Activated CD4-positive, alpha-beta T cell treated with anti-CD3 and anti-CD28 coated beads for 36 hours (primary cell): ENCODE measurements at regions of chr18 and their contacts with region 1.

Region 1: GRCh38 chr18:69958422-69958821 is 10.7 kb upstream of the CD226 start:
- DNase-seq: peak; percentile 72
- ATAC-seq: peak; percentile 73
- H3K4me3 Mint-ChIP-seq: no peak overlapping the region
- H3K27ac Mint-ChIP-seq: no peak overlapping the region
- H3K4me1 Mint-ChIP-seq: peaks cover 13% of the 10 kb centered on the region
- H3K27me3 Mint-ChIP-seq: no peaks in the 10 kb centered on the region

Region 2: GRCh38 chr18:69387186-69387585 is 571.2 kb before region 1 on chr18:
- CTCF ChIA-PET with region 1: no interaction called
- POLR2A ChIA-PET with region 1: no interaction called
- intact Hi-C with region 1: no loop called
- DNase-seq: no peak
- ATAC-seq: no peak
- H3K4me3 Mint-ChIP-seq: no peak overlapping the region
- H3K27ac Mint-ChIP-seq: no peak overlapping the region
- H3K4me1 Mint-ChIP-seq: no peaks in the 10 kb centered on the region
- H3K27me3 Mint-ChIP-seq: peaks cover 4% of the 10 kb centered on the region

Region 3: GRCh38 chr18:69885841-69886531 is 72.4 kb before region 1 on chr18:
- CTCF ChIA-PET with region 1: interaction called, 10 read pairs
- POLR2A ChIA-PET with region 1: interaction called, 9 read pairs
- intact Hi-C with region 1: loop called in 1 of 2 experiments (anchors 2 kb)
- DNase-seq: peak; percentile 79
- ATAC-seq: peak; percentile 71
- H3K4me3 Mint-ChIP-seq: peak overlapping the region; percentile 60
- H3K27ac Mint-ChIP-seq: peak overlapping the region; percentile 95
- H3K4me1 Mint-ChIP-seq: peaks cover 89% of the 10 kb centered on the region
- H3K27me3 Mint-ChIP-seq: no peaks in the 10 kb centered on the region

Region 4: GRCh38 chr18:69935319-69936190 is 22.9 kb before region 1 on chr18:
- CTCF ChIA-PET with region 1: interaction called, 7 read pairs
- POLR2A ChIA-PET with region 1: interaction called, 19 read pairs
- intact Hi-C with region 1: loop called (anchors 1 kb)
- DNase-seq: peak; percentile 93
- ATAC-seq: peak; percentile 92
- H3K4me3 Mint-ChIP-seq: no peak overlapping the region
- H3K27ac Mint-ChIP-seq: no peak overlapping the region
- H3K4me1 Mint-ChIP-seq: peaks cover 34% of the 10 kb centered on the region
- H3K27me3 Mint-ChIP-seq: no peaks in the 10 kb centered on the region

Region 5: GRCh38 chr18:69978732-69979715 is 20.6 kb after region 1 on chr18:
- CTCF ChIA-PET with region 1: interaction called, 3 read pairs
- POLR2A ChIA-PET with region 1: no interaction called
- intact Hi-C with region 1: loop called (anchors 1 to 2 kb)
- DNase-seq: peak; percentile 17
- ATAC-seq: peak; percentile 86
- H3K4me3 Mint-ChIP-seq: no peak overlapping the region
- H3K27ac Mint-ChIP-seq: peak overlapping the region; percentile 48
- H3K4me1 Mint-ChIP-seq: peaks cover 46% of the 10 kb centered on the region
- H3K27me3 Mint-ChIP-seq: no peaks in the 10 kb centered on the region

Region 6: GRCh38 chr18:70205421-70206397 is 247.3 kb after region 1 on chr18 and contains the start of gene RTTN:
- CTCF ChIA-PET with region 1: no interaction called
- POLR2A ChIA-PET with region 1: no interaction called
- intact Hi-C with region 1: loop called in 1 of 2 experiments (anchors 5 kb)
- DNase-seq: peak; percentile 95
- ATAC-seq: peak; percentile 95
- H3K4me3 Mint-ChIP-seq: peak within 1 kb of the TSS; percentile 93
- H3K27ac Mint-ChIP-seq: peak within 1 kb of the TSS; percentile 97
- H3K4me1 Mint-ChIP-seq: peaks cover 25% of the 10 kb centered on the region
- H3K27me3 Mint-ChIP-seq: peaks cover 2% of the 10 kb centered on the region
- total RNA-seq, gene RTTN: 22.2 to 29.7 TPM